HCT116 (cell line): ENCODE measurements at regions of chr19 and their contacts with region 1.

Region 1: DNA sequence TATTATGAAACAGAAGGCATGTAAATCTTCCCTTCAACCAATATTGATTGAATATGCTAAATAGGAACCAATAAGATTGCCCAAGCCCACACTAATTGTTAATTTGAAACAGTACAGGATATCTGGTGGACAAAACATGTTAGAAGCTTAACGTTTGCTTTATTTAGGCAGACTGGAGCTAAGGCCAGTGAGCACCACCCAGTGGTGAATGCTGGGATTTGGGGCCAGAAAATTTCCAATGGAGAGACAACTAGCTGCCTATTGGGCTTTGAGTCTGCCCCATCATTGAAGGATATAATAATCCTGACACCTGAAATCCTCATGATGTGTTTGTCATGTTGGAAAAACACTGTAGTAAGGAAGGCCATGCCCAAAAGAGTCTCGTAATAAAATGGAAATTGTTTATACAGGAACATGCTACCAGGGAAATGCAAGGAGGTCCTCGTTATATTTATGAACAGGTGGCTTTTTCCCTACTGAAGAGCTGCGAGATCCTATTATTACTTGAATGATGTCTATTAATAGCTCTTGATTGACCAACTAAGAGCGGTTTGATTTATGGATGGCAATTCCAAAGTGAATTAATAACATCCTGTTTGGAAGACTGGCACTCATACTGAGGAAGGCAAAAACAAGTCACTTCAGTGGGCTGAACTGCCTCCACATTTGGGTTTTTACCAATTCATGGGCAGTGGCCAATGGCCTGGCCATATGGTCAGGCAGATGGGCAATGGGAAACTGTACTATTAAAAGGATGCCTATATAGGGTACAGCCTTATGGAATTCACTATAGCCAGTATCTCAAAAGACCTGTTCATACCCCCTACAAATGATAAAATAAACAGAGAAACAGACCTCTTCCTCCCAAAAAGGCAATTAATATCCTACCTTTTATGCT is 8.7 kb downstream of the SIGLECL1 start:
- DNase-seq: peak; percentile 41
- ATAC-seq: peak; percentile 92
- H3K4me3 ChIP-seq: no peak overlapping the region
- H3K27ac ChIP-seq: no peak overlapping the region
- H3K4me1 ChIP-seq: no peaks in the 10 kb centered on the region
- H3K27me3 ChIP-seq: no peaks in the 10 kb centered on the region; the same call in 1 of the 2 replicates
- CTCF ChIP-seq: peak; percentile 73 to 87 (median 84)
- POLR2A ChIP-seq: no peak
- RAD21 ChIP-seq: peak; percentile 71

Region 2: DNA sequence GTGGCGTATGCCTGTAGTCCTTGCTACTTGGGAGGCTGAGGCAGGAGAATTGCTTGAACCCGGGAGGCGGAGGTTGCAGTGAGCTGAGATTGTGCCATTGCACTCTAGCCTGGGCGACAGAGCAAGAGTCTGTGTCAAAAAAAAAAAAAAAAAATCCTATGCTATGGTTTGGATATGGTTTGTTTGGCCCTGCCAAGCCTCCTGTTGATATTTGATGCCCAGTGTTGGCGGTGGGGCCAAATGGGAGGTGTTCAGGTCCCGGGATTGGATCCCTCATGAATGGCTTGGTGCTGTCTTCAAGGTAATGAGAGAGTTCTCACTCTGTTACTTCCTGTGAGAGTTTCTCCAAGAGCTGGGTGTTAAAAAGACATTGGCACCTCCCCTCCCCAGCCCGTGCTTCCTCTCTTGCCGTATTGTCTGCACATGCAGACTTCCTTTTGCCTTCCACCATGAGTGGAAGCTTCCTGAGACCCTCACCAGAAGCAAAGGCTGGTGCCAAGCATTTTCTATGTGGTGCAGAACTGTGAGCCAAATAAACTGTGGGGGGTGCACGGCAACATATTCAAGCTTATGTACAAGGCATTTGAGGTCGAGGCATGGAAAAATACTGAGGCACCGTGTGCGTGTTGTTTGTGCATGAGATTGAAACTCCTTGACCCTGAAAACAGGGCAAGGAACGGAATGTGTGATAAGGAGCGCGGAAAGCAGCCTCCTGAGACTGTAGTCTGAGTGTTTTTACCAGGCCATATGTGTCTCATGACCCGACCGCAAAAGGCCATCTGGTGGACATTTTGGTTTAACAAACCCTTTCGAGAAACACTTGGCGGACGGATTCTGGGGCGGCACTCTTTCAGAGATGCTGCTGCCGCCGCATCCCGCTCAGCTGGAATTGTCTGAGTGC is 127.6 kb before region 1 on chr19:
- CTCF ChIA-PET with region 1: no interaction called
- POLR2A ChIA-PET with region 1: no interaction called
- RAD21 ChIA-PET with region 1: no interaction called
- intact Hi-C with region 1: loop called (anchors 1 kb)
- DNase-seq: peak; percentile 10
- ATAC-seq: peak; percentile 67
- H3K4me3 ChIP-seq: no peak overlapping the region
- H3K27ac ChIP-seq: no peak overlapping the region
- H3K4me1 ChIP-seq: peaks cover 2 to 7% of the 10 kb centered on the region in 2 experiments; a peak in 1 of 4 replicates
- H3K27me3 ChIP-seq: 0 out of 2 replicates have a peak, but pooled peaks cover 3% of the 10 kb centered on the region
- CTCF ChIP-seq: peak in 2 of 3 experiments; percentile 14; a peak in 2 of 6 replicates
- POLR2A ChIP-seq: no peak
- RAD21 ChIP-seq: 0 out of 2 replicates have a peak, but pooled peaks have one; percentile 10

Region 3: GRCh38 chr19:51142119-51142518 is 117.5 kb before region 1 on chr19 and contains the start of gene SIGLEC7:
- CTCF ChIA-PET with region 1: no interaction called
- POLR2A ChIA-PET with region 1: no interaction called
- RAD21 ChIA-PET with region 1: no interaction called
- intact Hi-C with region 1: no loop called
- DNase-seq: no peak
- ATAC-seq: no peak
- H3K4me3 ChIP-seq: no peak within 1 kb of the TSS
- H3K27ac ChIP-seq: no peak within 1 kb of the TSS
- H3K4me1 ChIP-seq: no peaks in the 10 kb centered on the region
- H3K27me3 ChIP-seq: peaks cover 4% of the 10 kb centered on the region; the same call in 1 of the 2 replicates
- CTCF ChIP-seq: no peak
- POLR2A ChIP-seq: no peak
- RAD21 ChIP-seq: no peak
- total RNA-seq, gene SIGLEC7: not detected

Region 4: DNA sequence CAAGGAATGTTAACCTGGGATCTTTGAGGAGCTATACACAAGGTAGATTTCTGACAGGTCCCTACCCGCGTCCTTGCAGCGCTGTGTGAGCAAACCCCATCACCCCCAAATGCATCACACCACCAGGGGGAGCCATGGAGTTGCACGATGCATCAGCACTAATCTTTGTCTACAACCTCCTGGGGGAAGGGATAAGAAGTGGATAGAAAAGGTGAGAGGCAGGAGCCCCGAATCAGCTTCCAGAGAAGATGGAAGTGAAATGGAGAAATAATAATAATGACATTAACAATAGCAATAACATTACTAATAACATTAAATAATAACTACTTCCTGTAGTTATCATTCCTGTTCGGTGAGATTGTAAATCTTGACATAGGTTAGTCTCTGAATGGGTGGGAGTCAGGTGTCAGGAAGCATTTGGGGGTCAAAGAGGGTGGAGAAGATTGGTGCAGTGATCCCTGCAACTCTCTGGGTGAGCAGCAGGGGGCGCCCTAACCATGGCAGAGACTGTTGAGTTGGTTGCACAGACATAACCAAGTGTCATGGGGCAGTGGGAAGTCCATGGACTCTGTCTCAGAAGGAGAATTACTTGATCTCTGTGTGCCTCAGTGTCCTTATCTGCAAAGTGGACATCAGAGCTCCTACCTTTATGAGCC is 101.0 kb before region 1 on chr19:
- CTCF ChIA-PET with region 1: interaction called, 12 read pairs
- POLR2A ChIA-PET with region 1: no interaction called
- RAD21 ChIA-PET with region 1: interaction called in 1 of 2 experiments, 3 read pairs
- intact Hi-C with region 1: loop called (anchors 1 kb)
- DNase-seq: peak; percentile 36
- ATAC-seq: peak; percentile 90
- H3K4me3 ChIP-seq: no peak overlapping the region
- H3K27ac ChIP-seq: no peak overlapping the region
- H3K4me1 ChIP-seq: peaks cover 0 to 7% of the 10 kb centered on the region in 2 experiments; a peak in 1 of 4 replicates
- H3K27me3 ChIP-seq: no peaks in the 10 kb centered on the region
- CTCF ChIP-seq: peak; percentile 84 to 92 (median 88); a peak in 5 of 6 replicates
- POLR2A ChIP-seq: no peak
- RAD21 ChIP-seq: peak; percentile 72